Aorta (tissue), 5 donors: ENCODE measurements at regions of chr18 and their contacts with region 1.

Region 1: GRCh38 chr18:22465859-22466457 is 48.2 kb upstream of the CTAGE1 start:
- DNase-seq: peak in 1 of 2 donors; percentile 65
- ATAC-seq: peak; percentile 89
- H3K4me3 ChIP-seq: no peak overlapping the region
- H3K27ac ChIP-seq: peak overlapping the region; percentile 72 to 100
- H3K4me1 ChIP-seq: peaks cover 4 to 8% of the 10 kb centered on the region in 2 donors
- H3K27me3 ChIP-seq: no peaks in the 10 kb centered on the region

Region 2: DNA sequence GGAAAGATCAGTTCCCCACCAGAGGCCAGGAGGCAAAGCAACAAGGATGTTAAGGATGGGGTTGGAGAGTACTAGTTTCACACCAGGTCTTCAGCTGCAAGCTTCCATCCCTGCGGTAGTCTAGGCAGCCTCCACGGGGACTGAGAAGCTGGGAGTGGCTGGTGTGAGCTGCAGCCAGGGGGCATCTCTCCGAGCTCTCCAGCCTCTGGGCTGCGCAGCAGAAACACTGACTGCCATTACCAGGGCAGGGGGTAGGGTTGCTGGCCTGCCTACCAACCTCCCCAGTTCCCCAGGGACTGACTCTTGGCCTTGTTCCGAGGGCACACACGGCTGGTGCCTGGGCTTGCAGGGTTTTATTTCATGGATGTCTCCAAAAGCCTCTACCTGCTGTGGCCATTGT is 280.7 kb before region 1 on chr18:
- intact Hi-C with region 1: loop called in 1 of 2 experiments (anchors 2 kb)
- DNase-seq: peak; percentile 82 to 89
- ATAC-seq: peak; percentile 74
- H3K4me3 ChIP-seq: no peak overlapping the region
- H3K27ac ChIP-seq: peak overlapping the region; percentile 87 to 99
- H3K4me1 ChIP-seq: peaks cover 3 to 4% of the 10 kb centered on the region in 2 donors
- H3K27me3 ChIP-seq: no peaks in the 10 kb centered on the region

Region 3: DNA sequence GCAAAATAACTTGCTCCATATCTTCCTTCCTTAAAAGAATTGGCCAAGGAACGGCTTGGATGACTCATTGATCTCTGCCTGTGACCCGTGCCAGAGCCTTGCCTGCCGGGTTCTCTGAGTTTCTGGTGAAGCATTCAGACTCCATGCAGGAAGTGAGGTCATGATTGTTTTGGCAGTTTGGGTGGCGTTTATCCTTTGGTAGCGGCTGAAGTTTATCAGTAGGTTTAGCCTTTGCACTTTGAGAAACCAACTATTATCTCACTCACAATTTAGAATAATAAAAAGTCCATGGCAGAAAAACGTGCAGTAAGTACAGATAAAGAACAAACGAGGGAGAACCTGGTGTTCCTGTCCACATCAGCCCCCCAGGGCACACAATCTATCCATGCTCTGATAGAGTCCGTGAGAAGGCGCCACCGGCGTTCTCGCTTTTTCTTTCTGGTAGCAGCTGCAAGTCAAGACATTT is 33.3 kb before region 1 on chr18:
- intact Hi-C with region 1: loop called in 1 of 2 experiments (anchors 2 kb)
- DNase-seq: peak; percentile 90
- ATAC-seq: peak; percentile 89
- H3K4me3 ChIP-seq: peak overlapping the region; percentile 31 to 37
- H3K27ac ChIP-seq: peak overlapping the region; percentile 69 to 78
- H3K4me1 ChIP-seq: peaks cover 2 to 6% of the 10 kb centered on the region in 2 donors
- H3K27me3 ChIP-seq: no peaks in the 10 kb centered on the region

Region 4: DNA sequence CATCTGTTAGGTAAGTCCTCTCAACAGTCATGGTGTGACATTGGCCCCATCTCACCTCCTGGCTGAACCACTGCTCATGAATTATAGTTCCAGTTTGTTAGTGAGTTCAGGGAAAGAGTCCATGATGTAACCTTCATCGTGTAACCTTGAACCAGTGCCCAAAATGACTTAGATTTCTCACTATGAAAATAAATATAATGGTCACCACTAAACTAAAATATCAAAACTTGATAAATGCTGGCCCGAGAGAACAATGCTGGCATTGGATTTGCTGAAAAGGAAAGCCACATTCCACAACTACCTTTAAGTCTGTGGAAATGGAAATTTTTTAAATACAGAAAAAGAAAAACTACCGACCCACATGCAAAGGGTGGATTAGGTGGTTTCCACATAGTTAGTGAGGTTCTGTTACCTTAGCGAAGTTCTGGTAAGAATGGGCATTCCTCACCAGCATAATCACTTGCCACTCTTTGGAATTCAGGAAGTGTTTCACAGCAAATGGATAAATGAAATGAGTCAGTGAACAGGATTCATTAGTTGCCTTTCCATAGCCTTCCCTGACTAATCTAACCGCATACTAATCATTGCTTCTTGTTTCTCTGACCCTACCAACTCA is 85.7 kb after region 1 on chr18:
- intact Hi-C with region 1: loop called (anchors 2 kb)
- DNase-seq: no peak
- ATAC-seq: peak; percentile 63
- H3K4me3 ChIP-seq: no peak overlapping the region
- H3K27ac ChIP-seq: peak overlapping the region; percentile 28 to 66
- H3K4me1 ChIP-seq: peaks cover 2 to 8% of the 10 kb centered on the region in 2 donors
- H3K27me3 ChIP-seq: no peaks in the 10 kb centered on the region

Region 5: GRCh38 chr18:22822024-22822423 is 356.1 kb after region 1 on chr18:
- intact Hi-C with region 1: no loop called
- DNase-seq: no peak
- ATAC-seq: no peak
- H3K4me3 ChIP-seq: no peak overlapping the region
- H3K27ac ChIP-seq: no peak overlapping the region
- H3K4me1 ChIP-seq: no peaks in the 10 kb centered on the region
- H3K27me3 ChIP-seq: no peaks in the 10 kb centered on the region